ENCODE measurements at regions of chr3 and their contacts with region 1.

Region 1: GRCh38 chr3:128426128-128426921 is 40.4 kb downstream of the DNAJB8 start:
- DNase-seq: no peak
- ATAC-seq: peak; percentile 82
- H3K4me3 ChIP-seq: peak overlapping the region; percentile 8 to 49; a peak in 2 of 4 replicates
- H3K27ac ChIP-seq: peak overlapping the region; percentile 44; the same call in 1 of the 2 replicates
- H3K4me1 ChIP-seq: peaks cover 40 to 61% of the 10 kb centered on the region in 2 experiments
- H3K27me3 ChIP-seq: peaks cover 6% of the 10 kb centered on the region
- CTCF ChIP-seq: peak in 2 of 3 experiments; percentile 63 to 74; a peak in 4 of 6 replicates
- POLR2A ChIP-seq: no peak
- RAD21 ChIP-seq: no peak

Region 2: GRCh38 chr3:128226795-128227395 is 199.4 kb before region 1 on chr3:
- CTCF ChIA-PET with region 1: interaction called, 3 read pairs
- POLR2A ChIA-PET with region 1: no interaction called
- RAD21 ChIA-PET with region 1: no interaction called
- intact Hi-C with region 1: loop called (anchors 10 kb)
- DNase-seq: peak; percentile 10
- ATAC-seq: peak; percentile 99
- H3K4me3 ChIP-seq: no peak overlapping the region
- H3K27ac ChIP-seq: no peak overlapping the region
- H3K4me1 ChIP-seq: no peaks in the 10 kb centered on the region
- H3K27me3 ChIP-seq: no peaks in the 10 kb centered on the region
- CTCF ChIP-seq: peak; percentile 75 to 97 (median 89)
- POLR2A ChIP-seq: no peak
- RAD21 ChIP-seq: peak; percentile 79

Region 3: GRCh38 chr3:128503164-128503651 is 76.9 kb after region 1 on chr3:
- CTCF ChIA-PET with region 1: no interaction called
- POLR2A ChIA-PET with region 1: no interaction called
- RAD21 ChIA-PET with region 1: no interaction called
- intact Hi-C with region 1: loop called (anchors 5 kb)
- DNase-seq: no peak
- ATAC-seq: peak; percentile 59; the same call in 1 of the 2 replicates
- H3K4me3 ChIP-seq: no peak overlapping the region
- H3K27ac ChIP-seq: no peak overlapping the region
- H3K4me1 ChIP-seq: peaks cover 0 to 22% of the 10 kb centered on the region in 2 experiments; a peak in 2 of 4 replicates
- H3K27me3 ChIP-seq: no peaks in the 10 kb centered on the region
- CTCF ChIP-seq: peak; percentile 12 to 44 (median 36); a peak in 4 of 6 replicates
- POLR2A ChIP-seq: no peak
- RAD21 ChIP-seq: peak; percentile 38